MCF 10A (cell line): ENCODE measurements at regions of chr1 and their contacts with region 1.

Region 1: DNA sequence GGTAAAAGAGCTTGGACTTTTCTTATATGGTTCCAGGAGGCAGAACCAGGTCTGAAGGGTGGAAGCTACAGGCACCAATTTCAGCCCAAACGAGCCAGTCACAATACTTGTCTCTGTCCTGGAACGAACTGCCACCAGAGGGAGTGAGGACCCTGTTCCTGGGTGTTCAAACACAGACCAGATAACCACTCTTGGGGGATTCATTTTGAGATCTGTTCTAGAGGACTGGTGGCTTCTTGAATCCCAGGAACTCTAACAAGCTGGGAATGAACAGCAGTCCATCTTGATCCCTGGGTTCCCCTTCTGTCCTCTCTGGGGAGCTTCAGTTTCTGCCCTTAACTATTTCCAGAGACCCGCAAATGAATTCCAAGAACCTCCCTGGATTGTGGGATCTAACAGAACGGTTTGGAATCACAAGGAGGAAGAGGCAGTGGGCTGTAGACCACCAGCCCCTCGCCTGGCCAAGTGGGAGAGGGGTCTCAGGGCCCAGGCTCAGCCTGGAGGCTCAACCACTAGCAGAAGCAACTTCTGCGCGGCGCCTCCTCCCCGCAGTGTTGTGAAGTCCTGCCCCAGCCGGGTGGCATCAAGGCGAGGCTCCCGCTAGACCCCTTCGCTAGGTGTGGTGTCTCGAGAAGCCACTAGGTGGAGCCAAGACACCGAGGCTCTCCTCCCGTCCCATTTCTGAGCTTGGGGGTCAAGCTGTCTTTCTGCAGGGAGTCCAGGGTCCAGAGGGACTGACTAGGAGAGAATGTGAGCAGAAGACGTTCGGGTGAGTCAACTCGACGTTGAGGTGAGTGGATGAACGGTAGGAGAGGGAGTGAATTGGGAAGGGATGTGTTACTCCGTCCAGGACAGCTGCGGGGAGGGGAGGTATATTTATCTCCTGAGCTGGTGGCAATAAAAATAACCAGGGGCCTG is 12.1 kb upstream of the NES start:
- DNase-seq: peak; percentile 92
- H3K4me3 Mint-ChIP-seq: no peak overlapping the region
- H3K27ac Mint-ChIP-seq: no peak overlapping the region
- H3K4me1 Mint-ChIP-seq: peaks cover 32% of the 10 kb centered on the region
- H3K27me3 Mint-ChIP-seq: peaks cover 37% of the 10 kb centered on the region
- CTCF ChIP-seq: peak; percentile 97

Region 2: GRCh38 chr1:156338180-156338973 is 350.9 kb before region 1 on chr1 and contains the starts of genes CCT3 and TSACC:
- CTCF ChIA-PET with region 1: no interaction called
- POLR2A ChIA-PET with region 1: no interaction called
- intact Hi-C with region 1: no loop called
- DNase-seq: peak; percentile 100
- H3K4me3 Mint-ChIP-seq: peak within 1 kb of the TSS; percentile 96
- H3K27ac Mint-ChIP-seq: peak within 1 kb of the TSS; percentile 76
- H3K4me1 Mint-ChIP-seq: peaks cover 24% of the 10 kb centered on the region
- H3K27me3 Mint-ChIP-seq: no peaks in the 10 kb centered on the region
- CTCF ChIP-seq: no peak
- total RNA-seq, gene CCT3: 495 and 574 TPM in 2 replicates
- total RNA-seq, gene TSACC: 1.8 and 3.6 TPM in 2 replicates

Region 3: GRCh38 chr1:156641761-156642264 is 47.5 kb before region 1 on chr1 and contains the start of gene BCAN:
- CTCF ChIA-PET with region 1: interaction called, 15 read pairs
- POLR2A ChIA-PET with region 1: no interaction called
- intact Hi-C with region 1: no loop called
- DNase-seq: no peak
- H3K4me3 Mint-ChIP-seq: no peak within 1 kb of the TSS
- H3K27ac Mint-ChIP-seq: no peak within 1 kb of the TSS
- H3K4me1 Mint-ChIP-seq: peaks cover 15% of the 10 kb centered on the region
- H3K27me3 Mint-ChIP-seq: peaks cover 36% of the 10 kb centered on the region
- CTCF ChIP-seq: no peak
- total RNA-seq, gene BCAN: 0.37 TPM in 1 of 2 replicates, not detected in the other

Region 4: DNA sequence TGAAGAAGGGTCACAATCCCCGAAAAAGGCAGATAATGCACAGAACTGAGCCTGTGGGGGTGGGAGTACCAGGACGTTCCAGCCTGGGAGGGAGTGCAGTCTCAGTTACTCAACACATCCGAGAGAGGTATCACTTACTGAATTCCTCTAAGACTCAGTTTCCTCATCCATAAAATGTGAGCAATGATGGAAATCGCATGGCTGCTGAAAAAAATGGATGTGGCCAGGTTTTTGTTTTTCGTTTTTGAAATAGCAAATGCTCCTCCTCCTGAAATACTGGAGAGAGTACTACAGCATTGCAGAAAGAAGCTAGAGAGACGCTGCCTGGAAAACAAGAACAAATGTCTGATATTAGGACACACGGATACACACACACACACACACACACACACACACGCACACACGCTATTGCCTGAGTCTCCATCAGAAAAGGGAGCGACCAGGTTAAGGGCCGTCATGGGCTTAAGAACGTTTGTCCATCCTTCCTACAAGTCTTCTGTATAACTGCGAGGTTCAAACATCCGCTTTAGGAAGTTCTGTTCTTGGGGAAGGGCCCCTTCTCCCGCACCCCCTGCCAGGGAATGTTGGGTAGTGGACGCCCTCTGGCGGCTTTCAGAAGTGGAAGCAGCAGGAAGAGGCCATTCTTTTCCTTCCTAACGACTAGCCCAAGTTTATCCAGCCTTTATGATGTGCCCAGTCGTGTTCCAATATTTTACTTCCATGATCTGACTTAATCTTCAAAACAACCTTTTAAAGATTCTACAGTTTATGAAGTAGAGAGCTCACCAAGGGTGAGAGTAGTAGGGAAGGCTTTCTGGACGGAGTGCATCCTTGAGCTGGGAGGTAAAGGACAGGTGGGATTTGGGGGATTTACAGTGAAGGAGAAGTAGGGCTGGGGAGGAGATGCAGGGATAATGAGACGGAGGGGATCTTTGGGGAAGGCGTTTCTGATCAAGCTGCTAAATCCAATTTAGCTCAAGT is 11.4 kb before region 1 on chr1:
- CTCF ChIA-PET with region 1: interaction called, 2,415 read pairs
- POLR2A ChIA-PET with region 1: interaction called, 5 read pairs
- intact Hi-C with region 1: no loop called
- DNase-seq: peak; percentile 87
- H3K4me3 Mint-ChIP-seq: no peak overlapping the region
- H3K27ac Mint-ChIP-seq: no peak overlapping the region
- H3K4me1 Mint-ChIP-seq: peaks cover 6% of the 10 kb centered on the region
- H3K27me3 Mint-ChIP-seq: peaks cover 46% of the 10 kb centered on the region
- CTCF ChIP-seq: peak; percentile 91

Region 5: GRCh38 chr1:156728597-156729462 is 39.5 kb after region 1 on chr1 and contains the start of gene ISG20L2:
- CTCF ChIA-PET with region 1: interaction called, 2,415 read pairs
- POLR2A ChIA-PET with region 1: interaction called, 187 read pairs
- intact Hi-C with region 1: loop called (anchors 1 kb)
- DNase-seq: peak; percentile 98
- H3K4me3 Mint-ChIP-seq: no peak within 1 kb of the TSS
- H3K27ac Mint-ChIP-seq: no peak within 1 kb of the TSS
- H3K4me1 Mint-ChIP-seq: peaks cover 27% of the 10 kb centered on the region
- H3K27me3 Mint-ChIP-seq: no peaks in the 10 kb centered on the region
- CTCF ChIP-seq: no peak
- total RNA-seq, gene ISG20L2: 49.9 and 57.5 TPM in 2 replicates

Region 6: DNA sequence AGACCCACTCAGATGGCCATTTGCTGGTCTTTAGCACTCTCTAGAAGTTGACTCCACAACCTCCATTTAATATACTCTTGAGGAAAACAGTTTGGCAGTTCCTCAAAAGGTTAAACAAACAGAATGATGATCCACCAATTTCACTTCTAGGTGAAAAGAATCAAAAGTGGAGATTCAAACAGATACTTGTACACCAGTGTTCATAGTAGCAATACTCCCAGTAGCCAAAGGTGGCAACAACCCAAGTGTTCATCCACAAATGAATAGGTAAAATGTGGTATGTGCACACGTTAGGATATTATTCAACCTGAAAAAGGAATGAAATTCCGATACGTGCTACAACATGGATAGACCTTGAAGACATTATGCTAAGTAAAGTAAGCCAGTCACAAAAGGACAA is 84.3 kb after region 1 on chr1:
- CTCF ChIA-PET with region 1: interaction called, 32 read pairs
- POLR2A ChIA-PET with region 1: interaction called, 4 read pairs
- intact Hi-C with region 1: no loop called
- DNase-seq: no peak
- H3K4me3 Mint-ChIP-seq: no peak overlapping the region
- H3K27ac Mint-ChIP-seq: no peak overlapping the region
- H3K4me1 Mint-ChIP-seq: peaks cover 65% of the 10 kb centered on the region
- H3K27me3 Mint-ChIP-seq: no peaks in the 10 kb centered on the region
- CTCF ChIP-seq: no peak

Region 7: DNA sequence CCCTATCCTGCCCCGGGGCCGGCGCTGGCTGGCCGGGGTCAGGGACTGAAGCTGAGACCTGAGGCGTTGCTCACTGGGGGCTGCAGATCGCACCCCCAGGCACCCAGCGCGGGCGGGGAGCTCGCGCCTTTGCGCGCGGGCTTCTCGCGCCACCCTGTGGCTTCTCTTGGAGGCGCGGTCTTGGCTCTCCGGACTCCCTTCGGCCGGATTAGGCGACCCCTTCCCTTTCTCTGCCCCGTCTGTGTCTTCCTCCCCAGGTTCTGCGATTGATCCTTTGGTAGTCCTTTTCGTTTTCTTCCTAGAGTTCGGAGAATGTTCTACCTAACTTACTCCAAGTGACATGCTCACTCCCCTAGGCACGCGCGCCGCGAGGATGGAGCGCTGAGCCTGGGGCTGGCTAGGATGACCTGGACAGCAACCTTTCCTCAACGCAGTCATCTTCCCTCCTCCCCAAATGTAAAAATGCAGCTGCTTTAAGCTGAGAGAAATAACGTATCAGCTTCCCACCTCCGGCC is 170.9 kb after region 1 on chr1:
- CTCF ChIA-PET with region 1: interaction called, 19 read pairs
- POLR2A ChIA-PET with region 1: no interaction called
- intact Hi-C with region 1: loop called (anchors 1 kb)
- DNase-seq: peak; percentile 60
- H3K4me3 Mint-ChIP-seq: peak overlapping the region; percentile 57
- H3K27ac Mint-ChIP-seq: no peak overlapping the region
- H3K4me1 Mint-ChIP-seq: peaks cover 18% of the 10 kb centered on the region
- H3K27me3 Mint-ChIP-seq: peaks cover 53% of the 10 kb centered on the region
- CTCF ChIP-seq: peak; percentile 98